Activated CD8-positive, alpha-beta T cell treated with anti-CD3 and anti-CD28 coated beads, Interleukin-2, amount 10 ng/mL, durations not matched to agents 7 days and 5 days (primary cell): ENCODE measurements at regions of chr7 and their contacts with region 1.

Region 1: DNA sequence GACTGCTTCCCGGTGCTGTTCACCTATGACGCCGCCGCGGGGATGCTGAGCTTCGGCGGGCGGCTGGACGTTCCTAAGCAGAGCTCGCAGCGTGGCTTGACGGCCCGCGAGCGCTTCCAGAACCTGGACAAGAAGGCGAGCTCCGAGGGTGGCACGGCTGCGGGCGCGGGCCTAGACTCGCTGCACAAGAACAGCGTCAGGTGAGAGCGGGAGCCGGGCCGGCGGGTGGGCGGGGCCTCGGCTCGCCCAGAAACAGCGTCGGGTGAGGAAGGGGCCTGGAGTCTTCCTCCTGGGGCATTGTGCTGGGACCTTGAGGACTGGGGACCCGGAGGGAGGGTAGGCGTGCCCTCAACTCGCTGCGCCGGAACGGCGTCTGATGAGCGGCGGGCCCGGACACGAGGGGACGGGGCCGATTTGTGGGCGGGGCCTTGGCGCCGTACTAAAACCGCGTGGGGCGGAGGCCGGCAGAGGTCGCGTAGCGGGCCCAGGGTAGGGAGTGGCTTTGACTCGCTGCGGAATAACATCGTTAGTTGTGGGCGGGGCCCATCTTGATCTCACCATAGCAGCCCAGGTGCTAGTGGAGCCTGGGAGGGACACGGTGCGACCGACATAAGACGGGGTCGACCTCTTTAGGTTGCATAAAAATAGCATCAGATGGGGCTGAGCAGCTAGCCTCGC is 15.6 kb downstream of the PDAP1 start:
- DNase-seq: peak; percentile 89
- ATAC-seq: peak; percentile 96
- H3K4me3 Mint-ChIP-seq: peak overlapping the region; percentile 62
- H3K27ac Mint-ChIP-seq: peak overlapping the region; percentile 86
- H3K4me1 Mint-ChIP-seq: peaks cover 32% of the 10 kb centered on the region
- H3K27me3 Mint-ChIP-seq: no peaks in the 10 kb centered on the region

Region 2: DNA sequence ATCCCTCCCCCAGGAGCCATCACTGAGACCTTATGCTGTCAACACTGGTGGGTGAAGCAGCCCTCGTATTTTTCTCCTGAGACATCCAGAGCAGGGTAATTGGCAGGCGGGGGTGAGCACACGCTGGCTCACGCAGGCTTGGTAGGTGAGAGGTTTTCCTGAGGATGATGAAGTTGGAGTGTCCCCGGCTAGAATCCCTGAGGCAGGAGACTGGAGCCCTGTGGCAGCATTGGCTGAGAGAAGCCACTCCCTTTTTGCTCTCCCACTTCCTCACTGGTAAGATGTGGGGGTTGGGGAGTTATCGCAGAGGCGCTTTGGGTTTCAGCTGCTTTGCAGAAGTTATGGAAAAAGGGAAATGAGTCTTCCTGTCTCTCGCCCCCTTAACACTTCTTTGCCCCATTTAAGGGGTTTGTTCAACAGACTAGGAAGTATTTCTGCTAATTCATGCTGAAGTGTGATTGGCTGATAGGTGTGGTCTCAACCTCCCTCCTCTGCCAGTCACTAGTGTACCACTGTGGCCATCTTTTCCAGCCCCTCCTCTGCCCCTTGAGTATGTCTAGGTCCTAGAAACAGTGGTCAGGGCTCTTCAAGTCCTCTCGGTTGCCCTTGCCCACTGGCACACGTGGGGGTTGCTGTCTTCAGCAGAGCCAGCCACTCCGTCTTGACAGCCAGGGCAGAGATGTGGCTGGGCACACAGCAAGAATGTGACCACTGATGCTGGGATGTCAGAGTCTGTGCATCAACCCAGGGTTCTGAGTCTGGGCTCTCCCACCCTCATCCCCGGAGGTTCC is 12.6 kb before region 1 on chr7:
- CTCF ChIA-PET with region 1: no interaction called
- POLR2A ChIA-PET with region 1: interaction called, 10 read pairs
- DNase-seq: peak; percentile 49
- ATAC-seq: peak; percentile 28
- H3K4me3 Mint-ChIP-seq: peak overlapping the region; percentile 74
- H3K27ac Mint-ChIP-seq: peak overlapping the region; percentile 93
- H3K4me1 Mint-ChIP-seq: peaks cover 71% of the 10 kb centered on the region
- H3K27me3 Mint-ChIP-seq: no peaks in the 10 kb centered on the region